ENCODE measurements at regions of chr14 and their contacts with region 1.

Region 1: DNA sequence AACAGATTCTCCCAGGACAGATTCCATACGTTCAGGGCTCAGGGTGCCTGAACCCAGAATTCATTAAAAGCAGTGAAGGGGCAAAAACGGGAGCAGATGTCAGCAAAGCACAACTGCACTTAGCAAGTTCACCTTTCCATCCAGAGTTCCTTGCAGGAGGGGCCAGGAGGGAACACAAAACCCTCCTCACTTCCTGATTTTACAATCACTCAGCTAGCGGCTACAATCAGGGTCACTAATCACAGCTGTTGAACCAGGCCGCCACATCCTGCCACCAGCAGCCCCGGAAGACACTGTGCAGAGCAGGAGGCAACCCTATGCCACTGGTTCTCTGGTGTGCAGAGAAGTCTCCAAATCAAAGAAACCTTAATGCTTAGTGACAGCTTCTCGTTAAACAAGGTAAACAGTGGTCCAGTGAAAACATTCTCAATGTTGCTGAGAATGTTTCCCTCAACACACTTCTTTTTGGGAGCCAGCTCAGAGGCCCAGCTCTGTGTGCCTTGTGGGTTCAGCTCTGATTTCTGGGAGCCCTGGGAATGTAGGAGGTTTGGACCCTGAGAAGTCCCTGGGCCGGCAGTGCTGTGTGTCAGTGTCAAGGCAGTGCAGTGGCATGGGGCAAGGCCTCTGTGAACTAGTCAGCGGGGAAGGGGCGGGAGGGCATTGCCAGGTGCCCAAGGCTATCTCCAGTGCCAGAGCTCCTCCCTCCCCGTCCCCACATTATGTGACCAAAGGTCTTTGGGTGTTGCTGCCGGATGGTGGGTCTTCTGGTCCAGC is 54.5 kb downstream of the VCPKMT start:
- DNase-seq: peak; percentile 67
- H3K4me3 Mint-ChIP-seq: peak overlapping the region; percentile 99
- H3K27ac Mint-ChIP-seq: peak overlapping the region; percentile 100
- H3K4me1 Mint-ChIP-seq: peaks cover 94% of the 10 kb centered on the region
- H3K27me3 Mint-ChIP-seq: no peaks in the 10 kb centered on the region

Region 2: GRCh38 chr14:49867831-49868723 is 193.8 kb before region 1 on chr14:
- intact Hi-C with region 1: loop called (anchors 1 kb)
- DNase-seq: peak; percentile 92
- H3K4me3 Mint-ChIP-seq: peak overlapping the region; percentile 93
- H3K27ac Mint-ChIP-seq: peak overlapping the region; percentile 97
- H3K4me1 Mint-ChIP-seq: peaks cover 20% of the 10 kb centered on the region
- H3K27me3 Mint-ChIP-seq: no peaks in the 10 kb centered on the region

Region 3: GRCh38 chr14:49962621-49963020 is 99.2 kb before region 1 on chr14:
- intact Hi-C with region 1: no loop called
- DNase-seq: no peak
- H3K4me3 Mint-ChIP-seq: peak overlapping the region; percentile 50
- H3K27ac Mint-ChIP-seq: peak overlapping the region; percentile 75
- H3K4me1 Mint-ChIP-seq: peaks cover 67% of the 10 kb centered on the region
- H3K27me3 Mint-ChIP-seq: no peaks in the 10 kb centered on the region

Region 4: DNA sequence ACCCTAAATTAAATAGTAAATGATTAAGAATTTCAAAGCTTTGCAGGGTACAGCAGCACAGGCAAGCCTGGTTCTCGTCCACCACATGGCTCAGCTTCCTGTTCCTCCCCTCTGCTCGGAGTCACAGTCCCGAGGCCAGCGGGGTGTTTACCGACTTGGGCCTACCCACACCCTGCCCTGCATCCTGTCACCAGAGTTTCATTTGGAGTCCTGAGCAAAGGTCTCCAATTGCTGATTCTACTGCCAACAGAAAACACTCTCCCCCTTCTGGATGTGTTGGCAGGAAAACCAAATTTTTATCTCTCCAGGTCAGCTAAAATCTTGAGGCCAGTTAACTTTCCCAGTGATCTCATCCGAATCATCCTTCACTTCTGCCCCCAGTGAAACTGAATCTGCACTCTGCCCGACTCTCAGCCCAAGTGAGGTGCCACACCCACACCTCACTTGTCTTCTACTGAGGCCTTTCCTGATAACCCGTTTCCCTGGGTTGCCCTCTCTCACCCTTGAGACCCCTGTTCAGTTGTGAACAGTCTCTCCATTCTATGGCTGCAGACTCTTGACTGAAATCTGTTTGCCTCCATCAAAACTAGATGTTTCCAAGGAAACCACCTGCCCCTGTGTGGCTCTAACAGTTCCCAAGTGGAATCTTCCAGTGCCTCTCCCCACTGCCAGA is 16.7 kb before region 1 on chr14:
- intact Hi-C with region 1: loop called (anchors 1 kb)
- DNase-seq: peak; percentile 72
- H3K4me3 Mint-ChIP-seq: peak overlapping the region; percentile 21
- H3K27ac Mint-ChIP-seq: peak overlapping the region; percentile 97
- H3K4me1 Mint-ChIP-seq: peaks cover 66% of the 10 kb centered on the region
- H3K27me3 Mint-ChIP-seq: no peaks in the 10 kb centered on the region